ENCODE measurements at regions of chr17 and their contacts with region 1.

Region 1: DNA sequence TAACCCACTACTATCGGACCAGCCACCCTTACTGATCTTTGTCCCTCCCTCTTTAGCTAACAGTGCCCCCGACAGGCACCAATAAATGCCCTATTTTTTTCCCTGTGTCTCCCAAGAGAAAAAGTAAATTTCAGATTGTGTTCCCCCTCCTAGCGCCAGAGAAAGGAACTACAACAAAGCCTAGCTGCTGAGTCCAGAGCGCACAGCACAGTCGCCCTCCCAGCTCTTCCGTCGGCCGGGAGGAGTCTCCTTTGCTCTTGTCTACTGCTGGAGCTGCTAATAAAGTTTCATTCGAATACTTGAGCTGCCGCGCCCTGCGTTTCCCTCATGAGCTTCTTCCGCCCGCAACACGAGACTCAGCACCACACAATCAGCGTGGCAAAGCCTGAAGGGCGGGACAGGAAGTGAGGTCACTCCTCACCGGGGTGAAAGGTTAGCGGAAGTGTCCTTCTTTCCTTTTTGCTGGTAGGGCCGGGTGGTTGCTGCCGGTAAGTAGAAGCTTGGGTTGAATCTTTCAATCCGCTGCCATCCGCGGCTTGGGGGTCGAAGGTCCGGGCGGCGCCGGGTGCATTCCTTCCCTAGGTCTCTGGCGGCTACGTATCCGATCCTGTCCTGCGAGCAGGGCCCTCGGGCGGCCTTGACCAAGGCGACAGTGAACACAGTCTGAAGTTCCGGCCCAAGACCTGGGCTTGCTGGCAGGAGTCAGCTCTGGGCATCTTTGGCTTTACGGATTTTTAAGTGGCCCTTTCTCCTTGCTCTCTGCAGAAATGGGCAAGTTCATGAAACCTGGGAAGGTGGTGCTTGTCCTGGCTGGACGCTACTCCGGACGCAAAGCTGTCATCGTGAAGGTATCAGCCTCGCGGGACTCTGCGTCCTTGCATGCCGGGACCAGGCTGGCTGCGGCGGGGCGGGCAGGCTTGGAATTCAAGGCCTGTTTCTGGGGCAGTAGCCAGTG is at the start of gene RPL27:
- DNase-seq: peak; percentile 96 to 100 (median 99)
- H3K4me3 ChIP-seq: peak within 1 kb of the TSS; percentile 34 to 87 (median 70)
- H3K27ac ChIP-seq: peak within 1 kb of the TSS; percentile 51 to 97 (median 93)
- H3K4me1 ChIP-seq: peaks cover 12 to 26% of the 10 kb centered on the region in 2 donors
- H3K27me3 ChIP-seq: no peaks in the 10 kb centered on the region
- CTCF ChIP-seq: peak; percentile 90 to 97 (median 95)
- POLR2A ChIP-seq: peak; percentile 44 to 89
- total RNA-seq, gene RPL27: 356 to 1,636 (median 929) TPM

Region 2: GRCh38 chr17:42969001-42969581 is 29.2 kb before region 1 on chr17:
- intact Hi-C with region 1: loop called in 1 of 2 experiments (anchors 2 kb)
- DNase-seq: peak in 2 of 7 donors; percentile 38 to 44
- H3K4me3 ChIP-seq: no peak overlapping the region
- H3K27ac ChIP-seq: no peak overlapping the region
- H3K4me1 ChIP-seq: no peaks in the 10 kb centered on the region
- H3K27me3 ChIP-seq: no peaks in the 10 kb centered on the region
- CTCF ChIP-seq: no peak
- POLR2A ChIP-seq: no peak

Region 3: DNA sequence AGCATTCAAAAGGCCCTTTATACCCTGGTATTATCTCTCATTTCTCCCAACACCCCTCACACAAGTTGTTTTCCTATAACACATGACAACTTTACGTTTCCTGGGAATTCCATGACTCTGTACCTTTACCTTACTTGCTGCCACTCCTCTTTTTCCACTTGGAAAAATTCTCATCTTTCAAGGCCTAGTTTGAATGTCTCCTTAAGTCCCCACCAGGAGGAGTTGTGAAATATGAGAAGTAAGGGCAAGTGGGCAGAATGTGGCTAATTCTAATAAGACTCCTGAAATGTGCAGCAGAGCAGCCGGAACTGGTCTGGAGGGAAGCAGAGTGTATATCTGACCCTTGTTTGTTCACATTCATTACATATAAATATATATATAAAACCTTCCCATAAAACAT is 87.2 kb after region 1 on chr17:
- intact Hi-C with region 1: no loop called
- DNase-seq: no peak
- H3K4me3 ChIP-seq: no peak overlapping the region
- H3K27ac ChIP-seq: peak overlapping the region in 1 of 5 donors; percentile 80
- H3K4me1 ChIP-seq: peaks cover 0 to 6% of the 10 kb centered on the region in 2 donors
- H3K27me3 ChIP-seq: no peaks in the 10 kb centered on the region
- CTCF ChIP-seq: no peak
- POLR2A ChIP-seq: no peak

Measured in adrenal gland (tissue), 19 donors.